Heart left ventricle (tissue), 16 donors: ENCODE measurements at regions of chr11 and their contacts with region 1.

Region 1: DNA sequence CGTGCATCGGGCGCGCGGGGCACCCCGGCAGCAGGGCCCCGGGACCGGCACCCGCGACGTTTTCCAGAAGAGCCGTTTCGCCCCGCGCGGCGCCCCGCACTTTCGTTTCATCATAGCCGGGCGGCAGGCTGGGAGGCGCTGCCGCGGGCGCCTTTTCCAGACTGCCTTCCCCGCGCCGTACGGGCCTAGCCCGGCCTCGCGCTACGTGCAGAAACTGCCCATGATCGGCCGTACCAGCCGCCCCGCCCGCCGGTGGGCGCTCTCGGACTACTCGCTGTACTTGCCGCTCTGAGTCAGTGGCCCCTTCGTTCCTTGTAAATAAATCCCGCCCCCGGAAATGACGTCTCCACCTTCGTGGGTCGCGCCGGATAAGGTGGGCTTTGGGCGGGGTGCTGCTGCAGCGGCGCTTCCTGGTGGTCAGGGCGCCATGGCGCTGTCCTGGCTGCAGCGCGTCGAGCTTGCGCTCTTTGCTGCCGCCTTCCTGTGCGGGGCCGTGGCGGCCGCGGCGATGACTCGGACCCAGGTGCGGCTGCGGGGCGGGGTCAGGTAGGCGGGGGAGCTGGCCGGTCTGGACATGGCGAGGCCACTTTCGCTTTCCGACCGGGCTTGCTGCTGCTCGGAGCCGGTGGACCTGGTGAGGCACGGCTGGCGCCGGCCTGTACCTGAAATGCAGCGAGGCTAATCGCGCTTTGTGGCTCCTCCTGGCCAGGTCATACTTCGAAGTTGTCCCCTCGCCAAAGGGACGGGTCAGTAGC is at the start of gene TMEM179B:
- DNase-seq: peak; percentile 96 to 99 (median 99)
- ATAC-seq: peak; percentile 81 to 90 (median 89)
- H3K4me3 ChIP-seq: peak within 1 kb of the TSS; percentile 83 to 100 (median 92)
- H3K27ac ChIP-seq: peak within 1 kb of the TSS; percentile 88 to 100 (median 98)
- H3K4me1 ChIP-seq: peaks cover 6 to 54% (median 43%) of the 10 kb centered on the region in 12 donors
- H3K27me3 ChIP-seq: no peaks in the 10 kb centered on the region
- CTCF ChIP-seq: peak in 6 of 12 donors; percentile 28 to 60 (median 46)
- POLR2A ChIP-seq: peak; percentile 81 to 97
- total RNA-seq, gene TMEM179B: 14.7 to 46.0 (median 19.4) TPM

Region 2: DNA sequence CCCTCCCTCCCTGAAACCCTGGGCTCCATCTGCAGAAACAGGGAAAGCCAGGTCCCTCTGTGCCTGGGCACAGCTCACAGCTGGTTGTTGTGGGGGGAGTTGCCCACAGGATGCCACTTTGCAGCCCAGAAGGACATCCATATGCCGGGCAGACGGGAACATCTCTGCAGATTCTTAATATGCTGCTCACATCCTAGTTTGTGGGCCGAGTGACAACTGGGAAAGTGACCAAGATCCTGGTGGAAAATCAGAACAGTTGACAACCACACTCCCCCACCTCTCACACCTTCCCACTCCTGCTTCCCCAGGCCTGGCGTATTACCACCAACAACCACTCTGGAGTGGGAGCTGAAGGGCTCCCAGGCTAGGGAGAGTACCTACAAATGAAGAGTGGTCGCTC is 375.7 kb before region 1 on chr11:
- intact Hi-C with region 1: no loop called
- DNase-seq: no peak
- ATAC-seq: no peak
- H3K4me3 ChIP-seq: no peak overlapping the region
- H3K27ac ChIP-seq: no peak overlapping the region
- H3K4me1 ChIP-seq: no peaks in the 10 kb centered on the region
- H3K27me3 ChIP-seq: no peaks in the 10 kb centered on the region
- CTCF ChIP-seq: no peak
- POLR2A ChIP-seq: no peak

Region 3: DNA sequence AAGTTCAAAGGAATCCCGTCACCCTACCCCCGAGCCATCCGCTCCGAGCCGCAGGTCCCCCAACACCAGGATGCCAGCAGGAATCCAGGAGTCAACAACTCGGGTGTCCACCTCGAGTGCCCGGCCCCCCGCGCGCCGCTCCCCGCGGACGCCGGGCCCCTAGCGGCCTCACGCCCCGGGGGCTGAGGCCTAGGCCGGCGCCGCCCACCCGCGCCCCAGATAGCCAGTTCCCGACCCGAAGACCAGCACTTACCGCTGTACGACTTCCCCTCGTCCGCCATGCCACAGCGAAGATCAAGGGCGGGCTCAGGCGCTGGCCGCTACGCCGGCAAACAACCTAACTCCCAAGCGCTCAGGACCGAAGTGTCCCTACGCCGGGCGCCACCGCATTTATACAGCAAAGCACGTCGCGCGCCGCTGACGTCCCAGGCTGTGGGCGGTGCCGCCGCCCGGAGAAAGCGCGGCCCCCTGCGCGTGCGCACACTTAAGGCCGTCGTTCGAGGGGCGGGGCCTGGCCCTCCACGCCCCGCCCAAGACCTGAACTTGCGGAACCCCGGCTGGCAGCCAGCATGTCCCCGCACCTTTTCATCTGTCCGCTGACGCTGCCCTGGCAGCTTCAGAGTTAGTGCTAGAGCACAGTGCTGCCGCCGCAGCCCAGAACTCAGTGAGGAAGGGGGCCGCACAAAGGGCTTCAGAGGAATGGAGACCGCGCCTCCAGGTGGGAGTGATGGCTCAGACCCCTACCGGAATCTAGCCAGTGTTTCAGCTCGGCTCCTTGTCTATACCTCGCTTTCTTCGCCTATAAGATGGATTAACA is 18.1 kb after region 1 on chr11 and contains the start of gene NXF1:
- intact Hi-C with region 1: loop called in 1 of 10 experiments (anchors 2 kb)
- DNase-seq: peak; percentile 95 to 98 (median 95)
- ATAC-seq: peak; percentile 91 to 96 (median 94)
- H3K4me3 ChIP-seq: peak within 1 kb of the TSS; percentile 76 to 100 (median 86)
- H3K27ac ChIP-seq: peak within 1 kb of the TSS; percentile 58 to 95 (median 92)
- H3K4me1 ChIP-seq: peaks cover 0 to 39% (median 22%) of the 10 kb centered on the region in 12 donors
- H3K27me3 ChIP-seq: no peaks in the 10 kb centered on the region
- CTCF ChIP-seq: peak in 4 of 12 donors; percentile 17 to 24 (median 20)
- POLR2A ChIP-seq: peak; percentile 99 to 100
- total RNA-seq, gene NXF1: 28.5 to 51.7 (median 34.1) TPM

Region 4: DNA sequence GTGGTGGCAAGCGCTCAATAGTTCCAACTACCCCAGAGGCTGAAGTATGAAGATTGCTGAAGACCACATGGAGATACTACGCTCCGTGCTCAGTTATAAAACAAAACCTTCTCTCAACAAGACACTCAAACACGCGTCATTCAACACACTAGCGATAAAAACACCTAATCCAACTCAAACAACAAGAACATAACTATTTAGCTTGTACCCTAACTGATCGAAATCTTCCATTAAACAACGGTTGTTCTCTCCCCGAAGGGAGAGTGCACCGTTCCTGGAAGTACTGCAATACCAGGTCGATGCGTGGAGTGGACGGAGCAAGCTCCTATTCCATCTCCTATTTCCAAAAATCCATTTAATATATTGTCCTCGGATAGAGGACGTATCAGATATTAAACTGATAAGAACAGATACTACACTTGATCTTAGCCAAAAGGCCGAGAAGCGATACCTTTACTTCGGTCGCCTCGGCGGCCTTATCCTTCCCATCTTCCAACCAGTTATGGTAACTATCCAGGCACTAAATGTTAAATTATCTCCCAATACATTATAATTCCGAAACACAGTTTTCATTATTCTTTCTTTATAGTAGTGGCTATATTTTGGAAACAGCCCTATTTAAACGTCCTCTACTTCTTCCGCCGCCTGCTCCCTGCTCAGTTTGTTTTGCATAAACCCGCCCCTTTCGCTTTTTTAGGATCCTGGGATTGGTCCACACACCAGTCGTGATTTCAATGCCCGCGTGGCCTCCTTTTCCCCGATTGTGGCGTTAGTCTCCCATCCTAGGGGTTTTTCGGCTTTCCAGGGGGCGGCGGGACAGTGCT is 54.4 kb after region 1 on chr11:
- intact Hi-C with region 1: loop called in 3 of 10 experiments (anchors 2 to 5 kb)
- DNase-seq: peak; percentile 85 to 93 (median 88)
- ATAC-seq: peak; percentile 73 to 86 (median 77)
- H3K4me3 ChIP-seq: peak overlapping the region in 11 of 12 donors; percentile 38 to 98 (median 86)
- H3K27ac ChIP-seq: peak overlapping the region; percentile 82 to 99 (median 96)
- H3K4me1 ChIP-seq: peaks cover 5 to 33% (median 17%) of the 10 kb centered on the region in 12 donors
- H3K27me3 ChIP-seq: no peaks in the 10 kb centered on the region
- CTCF ChIP-seq: peak in 1 of 12 donors; percentile 2
- POLR2A ChIP-seq: peak; percentile 50 to 96

Region 5: DNA sequence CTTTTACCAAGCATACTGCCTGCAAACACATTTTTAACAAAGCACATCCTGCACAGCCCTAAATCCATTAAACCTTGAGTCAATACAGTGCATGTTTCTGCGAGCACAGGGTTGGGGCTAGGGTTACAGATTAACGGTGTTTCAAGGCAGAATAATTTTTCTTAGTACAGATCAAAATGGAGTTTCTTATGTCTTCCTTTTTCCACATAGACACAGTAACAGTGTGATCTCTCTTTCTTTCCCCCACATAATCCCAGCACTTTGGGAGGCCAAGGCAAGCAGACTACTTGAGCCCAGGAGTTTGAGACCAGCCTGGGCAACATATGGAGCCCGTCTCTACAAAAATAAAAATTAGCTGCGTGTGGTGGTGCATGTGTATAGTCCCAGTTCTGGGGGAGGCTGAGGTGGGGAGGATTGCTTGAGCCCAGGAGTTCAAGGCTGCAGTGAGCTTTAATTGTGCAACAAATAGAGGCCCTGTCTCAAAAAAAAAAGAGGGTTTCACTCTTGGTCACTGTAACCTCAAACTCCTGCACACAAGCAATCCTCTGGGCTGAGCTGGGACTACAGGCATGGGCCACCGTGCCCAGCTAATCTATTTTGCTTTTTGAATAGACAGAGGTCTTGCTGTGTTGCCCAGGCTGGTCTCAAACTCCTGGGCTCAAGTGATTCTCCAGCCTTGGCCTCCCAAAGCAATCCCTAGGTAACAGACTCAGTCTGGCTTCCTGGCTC is 73.8 kb after region 1 on chr11:
- intact Hi-C with region 1: loop called (anchors 1 to 5 kb)
- DNase-seq: no peak
- ATAC-seq: no peak
- H3K4me3 ChIP-seq: no peak overlapping the region
- H3K27ac ChIP-seq: peak overlapping the region in 1 of 12 donors; percentile 3
- H3K4me1 ChIP-seq: peaks cover 0 to 29% (median 5%) of the 10 kb centered on the region in 12 donors
- H3K27me3 ChIP-seq: no peaks in the 10 kb centered on the region
- CTCF ChIP-seq: no peak
- POLR2A ChIP-seq: no peak

Region 6: DNA sequence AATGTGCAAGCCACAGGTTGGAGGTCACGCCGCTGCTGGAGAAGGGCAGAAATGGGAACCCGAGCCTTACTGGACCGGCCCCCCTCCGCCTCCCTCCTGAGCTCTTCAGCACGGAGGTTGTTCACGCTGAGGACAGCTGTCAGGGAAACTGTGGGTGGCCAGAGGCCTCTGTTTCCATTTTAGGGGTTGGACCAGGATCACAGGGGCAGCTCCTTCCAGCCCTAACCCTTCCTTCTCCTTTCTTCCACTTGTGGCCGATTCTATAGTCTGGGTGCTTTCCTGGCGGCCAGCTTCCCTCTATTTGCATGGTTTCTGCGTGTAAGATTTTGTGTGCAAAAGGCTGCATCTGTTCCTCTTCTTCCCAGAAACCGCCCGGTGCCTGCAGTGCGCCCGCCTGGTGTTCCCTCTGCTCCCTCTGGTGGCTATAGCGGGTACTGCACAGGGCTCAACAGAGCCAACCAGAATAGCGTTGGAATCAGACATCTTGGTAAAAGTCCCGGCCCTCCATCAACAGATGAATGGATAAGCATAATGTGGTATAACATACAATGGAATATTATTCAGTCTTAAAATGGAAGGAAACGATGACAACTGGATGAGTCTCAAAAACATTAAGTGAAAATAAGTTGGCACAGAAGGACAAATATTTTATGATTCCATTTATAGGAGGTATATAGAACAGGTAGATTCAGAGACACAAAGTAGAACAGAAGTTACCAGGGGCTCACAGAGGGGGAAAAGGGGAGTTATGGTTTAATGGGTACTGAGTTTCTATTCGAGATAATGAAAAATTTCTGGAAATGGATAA is 236.9 kb after region 1 on chr11:
- intact Hi-C with region 1: no loop called
- DNase-seq: peak; percentile 81 to 91 (median 84)
- ATAC-seq: peak; percentile 79 to 94 (median 92)
- H3K4me3 ChIP-seq: peak overlapping the region in 1 of 12 donors; percentile 6
- H3K27ac ChIP-seq: no peak overlapping the region
- H3K4me1 ChIP-seq: peaks cover 0 to 10% (median 1%) of the 10 kb centered on the region in 12 donors
- H3K27me3 ChIP-seq: peaks cover 0 to 10% (median 0%) of the 10 kb centered on the region in 9 donors
- CTCF ChIP-seq: peak; percentile 99 to 100 (median 99)
- POLR2A ChIP-seq: no peak

Region 7: GRCh38 chr11:63369165-63369970 is 582.2 kb after region 1 on chr11 and contains the start of gene SLC22A9:
- intact Hi-C with region 1: no loop called
- DNase-seq: no peak
- ATAC-seq: no peak
- H3K4me3 ChIP-seq: no peak within 1 kb of the TSS
- H3K27ac ChIP-seq: no peak within 1 kb of the TSS
- H3K4me1 ChIP-seq: no peaks in the 10 kb centered on the region
- H3K27me3 ChIP-seq: peaks cover 0 to 7% (median 0%) of the 10 kb centered on the region in 9 donors
- CTCF ChIP-seq: no peak
- POLR2A ChIP-seq: no peak
- total RNA-seq, gene SLC22A9: not detected